GM23248 (cell line): ENCODE measurements at regions of chr14 and their contacts with region 1.

Region 1: DNA sequence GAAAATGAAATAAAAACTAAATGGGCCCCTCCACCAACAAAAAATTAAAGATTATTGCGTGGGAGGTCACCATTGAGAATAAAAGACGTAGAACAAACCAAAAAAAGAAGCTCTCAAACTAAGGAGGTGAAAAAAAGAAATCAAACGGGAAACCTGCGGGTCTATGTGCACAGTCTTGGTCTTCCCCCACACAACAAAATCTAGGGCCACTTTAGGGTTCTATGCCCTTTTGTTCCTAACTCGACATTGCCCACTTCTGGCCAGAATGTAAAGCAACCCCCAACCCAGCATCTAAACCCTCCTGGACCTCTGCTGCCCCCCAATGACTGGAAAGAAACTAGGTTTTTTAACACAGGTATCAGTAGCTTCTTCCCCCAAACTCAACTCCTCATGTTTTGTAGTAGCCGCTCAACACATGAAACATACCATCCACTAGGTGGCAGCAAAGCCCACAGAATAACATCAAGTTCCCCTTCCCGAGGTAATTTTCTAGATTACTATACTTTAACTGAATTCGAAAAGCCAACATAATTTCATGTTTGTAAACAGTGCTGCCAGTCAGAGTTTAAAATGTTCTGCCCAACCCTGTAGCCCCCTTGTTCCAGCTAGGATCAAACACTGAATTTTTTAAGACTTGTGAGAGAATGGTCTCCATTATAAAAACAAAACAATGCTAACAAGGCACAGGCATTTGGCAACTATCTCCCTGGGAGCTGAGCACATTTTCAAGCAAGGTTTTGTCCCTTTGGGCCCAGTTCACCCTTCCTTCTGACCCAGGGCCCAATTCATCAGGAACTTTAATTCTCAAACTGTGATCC is 18.7 kb downstream of the DAD1 start:
- DNase-seq: peak; percentile 76
- H3K4me3 ChIP-seq: no peak overlapping the region
- H3K27ac ChIP-seq: peak overlapping the region; percentile 32; the same call in 1 of the 2 replicates
- H3K4me1 ChIP-seq: peaks cover 31% of the 10 kb centered on the region
- H3K27me3 ChIP-seq: no peaks in the 10 kb centered on the region

Region 2: GRCh38 chr14:22653012-22653621 is 82.8 kb after region 1 on chr14:
- in situ Hi-C with region 1: loop called (anchors 10 kb)
- DNase-seq: peak; percentile 87
- H3K4me3 ChIP-seq: no peak overlapping the region
- H3K27ac ChIP-seq: no peak overlapping the region
- H3K4me1 ChIP-seq: peaks cover 14% of the 10 kb centered on the region
- H3K27me3 ChIP-seq: no peaks in the 10 kb centered on the region

Region 3: GRCh38 chr14:22666203-22666893 is 96.0 kb after region 1 on chr14:
- in situ Hi-C with region 1: no loop called
- DNase-seq: no peak
- H3K4me3 ChIP-seq: no peak overlapping the region
- H3K27ac ChIP-seq: no peak overlapping the region
- H3K4me1 ChIP-seq: peaks cover 16% of the 10 kb centered on the region
- H3K27me3 ChIP-seq: no peaks in the 10 kb centered on the region

Region 4: GRCh38 chr14:22766456-22767322 is 196.3 kb after region 1 on chr14 and contains the start of gene OXA1L:
- in situ Hi-C with region 1: loop called (anchors 10 kb)
- DNase-seq: peak; percentile 99
- H3K4me3 ChIP-seq: peak within 1 kb of the TSS; percentile 84
- H3K27ac ChIP-seq: peak within 1 kb of the TSS; percentile 92
- H3K4me1 ChIP-seq: peaks cover 9% of the 10 kb centered on the region; the same call in 1 of the 2 replicates
- H3K27me3 ChIP-seq: no peaks in the 10 kb centered on the region
- total RNA-seq, gene OXA1L: 59.1 and 78.6 TPM in 2 replicates